Psoas muscle (tissue), 8 donors: ENCODE measurements at regions of chr7 and their contacts with region 1.

Region 1: DNA sequence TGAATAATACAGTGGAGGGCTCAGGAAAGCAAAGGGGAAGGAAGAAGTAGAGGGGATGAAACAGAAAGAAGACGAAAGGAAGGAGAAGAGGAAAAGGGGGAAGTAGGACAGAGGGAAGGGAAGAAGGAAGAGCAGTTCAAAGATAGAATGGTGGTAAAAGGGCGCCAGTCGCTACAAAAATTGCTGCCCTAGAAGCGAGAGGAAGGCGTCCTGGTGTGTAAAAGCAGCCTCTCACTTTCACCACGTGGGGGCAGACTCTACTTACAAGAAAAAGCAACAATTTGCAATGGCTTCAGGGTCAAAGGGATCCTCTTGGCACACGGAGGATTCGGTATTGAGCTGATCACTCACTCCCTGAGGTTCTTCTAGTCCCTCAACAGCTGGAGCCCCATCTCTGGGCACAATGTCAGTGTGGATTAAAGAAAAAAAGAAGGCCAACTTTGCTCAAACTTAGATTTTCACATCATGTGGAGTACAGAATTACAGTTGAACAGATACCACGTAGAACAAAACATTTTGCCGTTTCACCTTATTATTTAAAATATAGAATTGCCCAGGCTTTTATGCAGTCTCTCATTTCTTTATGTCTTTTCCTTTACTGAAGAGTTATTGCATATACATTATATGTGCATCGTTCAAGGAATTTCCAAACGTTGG is 31.4 kb upstream of the NPVF start:
- DNase-seq: peak; percentile 32 to 56
- ATAC-seq: peak; percentile 83 to 96 (median 88)
- H3K4me3 ChIP-seq: no peak overlapping the region
- H3K27ac ChIP-seq: no peak overlapping the region
- H3K4me1 ChIP-seq: peaks cover 3% of the 10 kb centered on the region
- H3K27me3 ChIP-seq: no peaks in the 10 kb centered on the region
- CTCF ChIP-seq: peak; percentile 79

Region 2: GRCh38 chr7:24945899-24946298 is 313.8 kb before region 1 on chr7:
- intact Hi-C with region 1: no loop called
- DNase-seq: no peak
- ATAC-seq: no peak
- H3K4me3 ChIP-seq: no peak overlapping the region
- H3K27ac ChIP-seq: no peak overlapping the region
- H3K4me1 ChIP-seq: no peaks in the 10 kb centered on the region
- H3K27me3 ChIP-seq: no peaks in the 10 kb centered on the region
- CTCF ChIP-seq: no peak

Region 3: GRCh38 chr7:25139536-25139935 is 120.2 kb before region 1 on chr7:
- intact Hi-C with region 1: no loop called
- DNase-seq: no peak
- ATAC-seq: no peak
- H3K4me3 ChIP-seq: no peak overlapping the region
- H3K27ac ChIP-seq: no peak overlapping the region
- H3K4me1 ChIP-seq: no peaks in the 10 kb centered on the region
- H3K27me3 ChIP-seq: no peaks in the 10 kb centered on the region
- CTCF ChIP-seq: no peak

Region 4: GRCh38 chr7:25206765-25207164 is 53.0 kb before region 1 on chr7:
- intact Hi-C with region 1: no loop called
- DNase-seq: no peak
- ATAC-seq: no peak
- H3K4me3 ChIP-seq: no peak overlapping the region
- H3K27ac ChIP-seq: no peak overlapping the region
- H3K4me1 ChIP-seq: no peaks in the 10 kb centered on the region
- H3K27me3 ChIP-seq: peaks cover 0 to 10% (median 0%) of the 10 kb centered on the region in 3 donors
- CTCF ChIP-seq: no peak

Region 5: DNA sequence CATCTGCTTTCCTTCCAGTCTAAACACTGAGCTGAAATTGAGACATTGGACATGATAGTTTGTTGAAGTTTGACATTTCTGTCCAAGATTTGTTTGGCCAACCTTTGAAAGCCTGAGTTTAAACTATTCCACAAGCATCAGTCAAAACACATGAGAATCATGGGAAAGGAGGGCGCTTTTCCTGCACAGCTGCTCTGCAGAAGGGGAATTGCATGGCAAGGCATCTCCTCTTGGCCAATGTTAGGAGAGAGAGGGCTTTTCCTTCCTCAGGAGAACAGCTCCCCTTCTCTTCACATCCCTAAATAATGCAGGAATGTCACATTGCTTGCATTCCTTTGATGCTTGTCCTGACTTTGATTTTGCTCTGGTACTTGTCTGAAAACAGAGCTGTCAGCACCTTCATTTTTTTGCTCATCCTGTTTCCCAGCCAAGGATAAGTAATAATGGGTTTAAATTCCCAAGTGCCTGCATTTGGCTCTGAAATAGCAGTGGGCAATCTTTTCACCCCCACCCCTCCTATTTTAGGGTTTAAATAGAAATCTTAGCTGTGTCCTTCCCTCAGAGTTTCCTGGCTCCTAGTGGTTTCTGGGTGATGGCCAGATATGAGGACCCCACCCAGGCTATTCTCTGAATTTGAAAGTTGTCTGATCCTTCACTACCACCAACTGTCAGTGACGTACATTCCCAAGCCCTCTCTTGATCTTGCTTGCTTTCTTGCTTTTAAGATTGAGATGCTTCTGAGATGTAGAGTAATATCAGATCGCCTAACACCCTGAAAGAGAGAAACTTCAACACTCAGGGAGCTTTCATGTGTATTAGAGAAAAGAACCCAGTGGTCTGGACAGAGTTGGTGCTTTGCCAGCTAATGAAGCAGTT is 43.8 kb after region 1 on chr7:
- intact Hi-C with region 1: no loop called
- DNase-seq: no peak
- ATAC-seq: no peak
- H3K4me3 ChIP-seq: no peak overlapping the region
- H3K27ac ChIP-seq: no peak overlapping the region
- H3K4me1 ChIP-seq: no peaks in the 10 kb centered on the region
- H3K27me3 ChIP-seq: peaks cover 0 to 2% (median 0%) of the 10 kb centered on the region in 3 donors
- CTCF ChIP-seq: no peak

Region 6: GRCh38 chr7:25389489-25390106 is 129.9 kb after region 1 on chr7:
- intact Hi-C with region 1: loop called (anchors 1 to 5 kb)
- DNase-seq: no peak
- ATAC-seq: peak in 1 of 4 donors; percentile 35
- H3K4me3 ChIP-seq: no peak overlapping the region
- H3K27ac ChIP-seq: no peak overlapping the region
- H3K4me1 ChIP-seq: peaks cover 8% of the 10 kb centered on the region
- H3K27me3 ChIP-seq: no peaks in the 10 kb centered on the region
- CTCF ChIP-seq: peak; percentile 31

Region 7: GRCh38 chr7:25565949-25566348 is 306.2 kb after region 1 on chr7:
- intact Hi-C with region 1: loop called (anchors 1 to 2 kb)
- DNase-seq: peak; percentile 17 to 64
- ATAC-seq: peak in 3 of 4 donors; percentile 64 to 80 (median 70)
- H3K4me3 ChIP-seq: peak overlapping the region; percentile 22
- H3K27ac ChIP-seq: no peak overlapping the region
- H3K4me1 ChIP-seq: peaks cover 18% of the 10 kb centered on the region
- H3K27me3 ChIP-seq: no peaks in the 10 kb centered on the region
- CTCF ChIP-seq: peak; percentile 100